ENCODE measurements at regions of chr5 and their contacts with region 1.

Region 1: GRCh38 chr5:148290271-148291195 is 21.7 kb upstream of the SPINK7 start:
- DNase-seq: no peak
- H3K4me3 ChIP-seq: no peak overlapping the region
- H3K27ac ChIP-seq: no peak overlapping the region
- H3K4me1 ChIP-seq: no peaks in the 10 kb centered on the region
- H3K27me3 ChIP-seq: no peaks in the 10 kb centered on the region
- CTCF ChIP-seq: peak; percentile 68

Region 2: DNA sequence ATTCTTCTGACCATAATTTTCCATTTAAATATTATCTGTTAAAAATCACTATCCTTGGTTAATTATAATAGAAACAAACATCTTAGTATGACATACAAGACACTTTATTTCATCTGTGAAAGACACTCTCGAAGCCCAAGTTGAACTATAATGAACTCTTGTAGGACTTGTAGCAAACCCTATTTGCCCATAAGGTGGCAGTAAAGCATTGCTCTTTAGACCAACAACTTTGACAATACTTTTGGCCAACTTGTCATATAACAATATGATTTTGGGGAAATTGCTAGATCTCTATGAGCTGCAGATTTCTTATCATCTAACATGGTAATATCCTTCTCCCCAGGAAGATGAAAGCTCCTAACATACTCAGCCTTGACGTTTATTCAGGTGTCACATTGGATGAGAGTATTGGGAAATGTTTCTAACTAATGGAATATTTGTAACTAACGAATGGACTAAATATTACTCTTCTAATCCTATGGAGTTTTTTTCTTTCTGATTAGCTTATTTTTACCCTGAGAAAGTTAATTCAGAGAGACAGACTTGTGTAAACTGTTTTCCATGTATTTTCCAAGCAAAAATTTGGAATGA is 111.2 kb before region 1 on chr5:
- CTCF ChIA-PET with region 1: no interaction called
- POLR2A ChIA-PET with region 1: no interaction called
- intact Hi-C with region 1: no loop called
- DNase-seq: peak; percentile 6 to 63
- H3K4me3 ChIP-seq: no peak overlapping the region
- H3K27ac ChIP-seq: no peak overlapping the region
- H3K4me1 ChIP-seq: no peaks in the 10 kb centered on the region
- H3K27me3 ChIP-seq: no peaks in the 10 kb centered on the region
- CTCF ChIP-seq: peak; percentile 84

Region 3: GRCh38 chr5:148353634-148354033 is 63.1 kb after region 1 on chr5:
- CTCF ChIA-PET with region 1: no interaction called
- POLR2A ChIA-PET with region 1: no interaction called
- intact Hi-C with region 1: loop called (anchors 5 kb)
- DNase-seq: no peak
- H3K4me3 ChIP-seq: no peak overlapping the region
- H3K27ac ChIP-seq: no peak overlapping the region
- H3K4me1 ChIP-seq: no peaks in the 10 kb centered on the region
- H3K27me3 ChIP-seq: no peaks in the 10 kb centered on the region
- CTCF ChIP-seq: peak; percentile 49

Region 4: GRCh38 chr5:148374692-148375360 is 84.3 kb after region 1 on chr5:
- CTCF ChIA-PET with region 1: no interaction called
- POLR2A ChIA-PET with region 1: no interaction called
- intact Hi-C with region 1: loop called (anchors 1 kb)
- DNase-seq: peak; percentile 36 to 48
- H3K4me3 ChIP-seq: no peak overlapping the region
- H3K27ac ChIP-seq: no peak overlapping the region
- H3K4me1 ChIP-seq: no peaks in the 10 kb centered on the region
- H3K27me3 ChIP-seq: no peaks in the 10 kb centered on the region
- CTCF ChIP-seq: peak; percentile 84